WTC11 (cell line): ENCODE measurements at regions of chr13 and their contacts with region 1.

Region 1: GRCh38 chr13:99656092-99656745 is 154.9 kb downstream of the TM9SF2 start:
- DNase-seq: peak; percentile 92
- ATAC-seq: peak; percentile 72
- H3K4me3 Mint-ChIP-seq: peak overlapping the region; percentile 20; the same call in 1 of the 2 replicates
- H3K27ac Mint-ChIP-seq: peak overlapping the region; percentile 84
- H3K4me1 Mint-ChIP-seq: peaks cover 56% of the 10 kb centered on the region
- H3K27me3 Mint-ChIP-seq: no peaks in the 10 kb centered on the region
- CTCF ChIP-seq: peak; percentile 90

Region 2: DNA sequence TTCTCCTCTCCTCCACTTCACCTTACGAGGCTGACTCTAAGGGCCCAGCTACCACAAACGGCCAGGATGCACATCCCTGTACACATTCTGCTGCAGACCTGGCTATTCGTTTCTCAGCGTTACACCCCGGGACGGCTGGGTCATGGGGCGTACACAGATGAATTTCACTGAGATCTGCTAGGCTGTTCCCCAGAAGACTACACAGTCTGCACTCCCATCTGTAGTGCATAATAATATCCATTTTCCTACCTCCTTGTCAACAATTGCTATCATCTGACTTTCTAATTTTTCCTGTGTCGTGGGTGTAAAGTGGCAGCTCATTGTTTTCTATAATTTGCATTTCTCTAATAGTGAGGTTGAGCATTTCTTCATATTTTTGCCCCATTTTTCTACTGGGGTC is 69.2 kb before region 1 on chr13:
- CTCF ChIA-PET with region 1: no interaction called
- POLR2A ChIA-PET with region 1: no interaction called
- DNase-seq: no peak
- ATAC-seq: no peak
- H3K4me3 Mint-ChIP-seq: no peak overlapping the region
- H3K27ac Mint-ChIP-seq: no peak overlapping the region
- H3K4me1 Mint-ChIP-seq: no peaks in the 10 kb centered on the region
- H3K27me3 Mint-ChIP-seq: peaks cover 3% of the 10 kb centered on the region; the same call in 1 of the 2 replicates
- CTCF ChIP-seq: no peak

Region 3: DNA sequence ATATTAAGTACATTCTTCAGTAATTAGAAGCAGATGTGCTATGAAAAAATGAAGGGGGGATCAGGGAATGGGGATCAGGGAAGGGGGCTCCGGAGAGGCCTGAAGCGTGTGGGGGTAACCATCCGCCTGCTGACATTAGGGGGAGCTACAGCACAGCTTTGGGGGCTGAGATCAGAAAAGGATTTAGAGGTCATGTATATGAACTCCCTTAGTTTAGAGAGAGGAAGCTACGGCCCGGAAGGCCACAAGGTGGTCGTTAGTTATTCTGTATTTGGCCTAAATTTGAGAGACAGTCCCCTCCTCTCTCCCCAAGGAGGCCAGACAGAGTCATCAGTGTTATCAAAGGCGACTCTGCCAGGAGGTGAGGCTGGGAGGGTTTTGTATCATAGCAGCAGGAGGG is 55.9 kb before region 1 on chr13:
- CTCF ChIA-PET with region 1: interaction called, 10 read pairs
- POLR2A ChIA-PET with region 1: no interaction called
- DNase-seq: peak; percentile 77
- ATAC-seq: peak; percentile 99
- H3K4me3 Mint-ChIP-seq: no peak overlapping the region
- H3K27ac Mint-ChIP-seq: no peak overlapping the region
- H3K4me1 Mint-ChIP-seq: peaks cover 19% of the 10 kb centered on the region
- H3K27me3 Mint-ChIP-seq: no peaks in the 10 kb centered on the region
- CTCF ChIP-seq: peak; percentile 45; the same call in 1 of the 2 replicates

Region 4: DNA sequence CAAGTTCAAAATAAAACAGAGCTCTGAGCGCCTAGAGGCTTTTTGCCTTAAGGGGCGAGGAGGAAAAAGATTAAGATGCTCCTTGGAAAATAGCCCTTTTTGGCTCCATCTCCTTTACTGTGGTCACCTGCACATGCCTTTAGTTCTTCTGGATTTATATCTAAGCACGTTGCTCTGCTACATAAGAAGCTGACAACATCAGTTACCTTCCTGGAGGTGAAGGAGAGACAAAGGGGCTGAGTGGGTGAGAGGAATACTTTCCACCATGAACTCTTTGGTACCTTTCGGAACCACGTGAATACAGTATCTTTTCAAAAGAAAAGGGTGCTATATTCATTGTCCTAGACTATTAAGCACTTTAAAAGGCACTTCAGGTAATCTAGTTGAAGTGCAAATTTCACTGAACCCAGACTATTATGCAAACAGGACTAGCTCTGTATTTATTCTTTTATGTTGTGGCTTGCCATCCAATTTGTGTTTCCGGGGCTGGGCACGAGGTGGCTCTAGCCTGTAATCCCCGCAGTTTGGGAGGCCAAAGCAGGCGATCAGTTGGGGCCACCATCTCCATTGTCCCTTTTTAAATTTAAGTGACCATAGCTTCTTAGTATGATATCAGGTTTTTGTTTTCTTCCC is 46.6 kb after region 1 on chr13:
- CTCF ChIA-PET with region 1: interaction called, 14 read pairs
- POLR2A ChIA-PET with region 1: interaction called, 9 read pairs
- DNase-seq: peak; percentile 38
- ATAC-seq: peak; percentile 61
- H3K4me3 Mint-ChIP-seq: peak overlapping the region; percentile 27; the same call in 1 of the 2 replicates
- H3K27ac Mint-ChIP-seq: peak overlapping the region; percentile 97
- H3K4me1 Mint-ChIP-seq: peaks cover 68% of the 10 kb centered on the region
- H3K27me3 Mint-ChIP-seq: no peaks in the 10 kb centered on the region
- CTCF ChIP-seq: no peak

Region 5: DNA sequence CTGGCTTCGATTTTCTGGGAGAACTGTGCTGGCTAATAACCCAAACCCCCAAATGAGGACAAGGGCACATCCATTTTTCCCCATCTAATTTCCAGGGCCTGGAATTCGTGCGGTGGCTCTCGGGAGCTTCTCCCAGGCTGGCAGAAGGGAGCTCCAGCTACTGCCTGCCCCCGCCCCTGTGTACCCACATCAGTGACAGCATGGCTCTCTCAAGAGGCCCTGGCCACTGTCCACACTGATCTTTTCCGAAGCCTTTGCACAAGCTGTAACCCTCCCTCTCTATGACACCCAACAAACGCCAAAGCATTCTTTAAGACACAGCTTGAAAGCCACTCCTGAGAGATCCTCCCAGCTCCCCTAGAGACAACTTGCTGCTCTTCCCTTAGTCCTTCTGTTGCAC is 242.2 kb after region 1 on chr13:
- CTCF ChIA-PET with region 1: interaction called, 12 read pairs
- POLR2A ChIA-PET with region 1: no interaction called
- DNase-seq: no peak
- ATAC-seq: no peak
- H3K4me3 Mint-ChIP-seq: no peak overlapping the region
- H3K27ac Mint-ChIP-seq: no peak overlapping the region
- H3K4me1 Mint-ChIP-seq: peaks cover 73% of the 10 kb centered on the region
- H3K27me3 Mint-ChIP-seq: peaks cover 32% of the 10 kb centered on the region
- CTCF ChIP-seq: no peak

Region 6: DNA sequence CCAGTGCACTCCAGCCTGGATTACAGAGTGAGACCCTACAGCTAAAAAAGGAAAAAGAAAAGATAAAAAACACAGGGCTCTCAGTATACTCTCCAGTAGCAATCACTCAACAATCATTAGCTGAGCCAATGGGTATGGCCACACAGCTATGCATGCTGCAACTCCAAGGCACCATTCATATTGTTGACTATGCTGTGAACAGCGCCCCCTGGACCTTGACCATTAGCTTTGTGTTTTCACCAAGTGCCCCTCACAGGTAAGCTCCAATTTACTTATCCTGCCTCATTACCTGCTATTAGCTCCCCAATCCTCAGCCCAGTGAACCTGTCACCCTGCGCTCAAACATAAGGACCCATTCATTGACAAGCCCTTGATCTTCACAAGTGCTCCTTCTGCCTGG is 279.6 kb after region 1 on chr13:
- CTCF ChIA-PET with region 1: interaction called, 11 read pairs
- POLR2A ChIA-PET with region 1: no interaction called
- DNase-seq: peak; percentile 56
- ATAC-seq: peak; percentile 60
- H3K4me3 Mint-ChIP-seq: no peak overlapping the region
- H3K27ac Mint-ChIP-seq: no peak overlapping the region
- H3K4me1 Mint-ChIP-seq: peaks cover 10% of the 10 kb centered on the region
- H3K27me3 Mint-ChIP-seq: no peaks in the 10 kb centered on the region; the same call in 1 of the 2 replicates
- CTCF ChIP-seq: peak; percentile 25; the same call in 1 of the 2 replicates